ENCODE measurements at regions of chr10 and their contacts with region 1.

Region 1: GRCh38 chr10:79929409-79929904 is 19.4 kb downstream of the SFTPD start:
- DNase-seq: peak; percentile 56 to 89
- H3K4me3 ChIP-seq: no peak overlapping the region
- H3K4me1 ChIP-seq: no peaks in the 10 kb centered on the region
- H3K27me3 ChIP-seq: peaks cover 4% of the 10 kb centered on the region; the same call in 1 of the 2 replicates

Region 2: GRCh38 chr10:79562135-79562756 is 367.2 kb before region 1 on chr10:
- in situ Hi-C with region 1: loop called (anchors 5 kb)
- DNase-seq: peak; percentile 62 to 85
- H3K4me3 ChIP-seq: no peak overlapping the region
- H3K4me1 ChIP-seq: no peaks in the 10 kb centered on the region; the same call in 1 of the 2 replicates
- H3K27me3 ChIP-seq: no peaks in the 10 kb centered on the region

Region 3: GRCh38 chr10:80211786-80212185 is 282.3 kb after region 1 on chr10:
- in situ Hi-C with region 1: no loop called
- DNase-seq: no peak
- H3K4me3 ChIP-seq: no peak overlapping the region
- H3K4me1 ChIP-seq: no peaks in the 10 kb centered on the region
- H3K27me3 ChIP-seq: no peaks in the 10 kb centered on the region

Measured in HAP-1 (cell line).